AG04449 (cell line): ENCODE measurements at regions of chr5 and their contacts with region 1.

Region 1: DNA sequence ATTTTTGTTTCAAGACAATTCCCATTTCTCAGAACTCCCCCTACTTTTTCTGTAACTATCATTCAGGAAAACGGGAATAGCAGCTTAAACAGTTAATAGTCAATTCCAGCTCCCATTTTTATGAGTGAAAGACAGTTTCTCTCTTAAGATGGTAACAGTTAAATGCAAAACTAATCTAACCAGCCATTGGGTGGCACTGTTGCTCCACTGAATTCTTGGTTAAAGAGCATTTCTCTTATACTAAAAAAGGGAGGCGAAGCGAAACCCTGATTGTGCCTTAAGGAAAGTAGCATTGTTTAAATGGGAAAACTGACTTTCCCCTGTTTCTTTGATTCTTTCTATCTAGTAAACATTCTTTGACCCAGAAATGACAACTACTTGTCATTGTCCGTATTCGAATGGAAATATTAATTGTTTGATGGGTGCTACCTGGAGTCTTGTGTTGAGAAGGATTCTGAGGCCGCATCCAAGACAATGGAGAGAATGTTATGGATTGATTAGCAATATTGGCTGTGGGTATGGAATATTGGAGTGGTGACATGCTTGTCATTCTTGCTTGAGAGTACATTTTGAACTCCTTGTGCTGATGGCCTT is 507.8 kb downstream of the MAT2B start:
- DNase-seq: no peak
- H3K4me3 ChIP-seq: no peak overlapping the region
- CTCF ChIP-seq: peak; percentile 54

Region 2: GRCh38 chr5:163421673-163422072 is 591.5 kb before region 1 on chr5:
- CTCF ChIA-PET with region 1: no interaction called
- POLR2A ChIA-PET with region 1: no interaction called
- DNase-seq: no peak
- H3K4me3 ChIP-seq: no peak overlapping the region
- CTCF ChIP-seq: no peak

Region 3: DNA sequence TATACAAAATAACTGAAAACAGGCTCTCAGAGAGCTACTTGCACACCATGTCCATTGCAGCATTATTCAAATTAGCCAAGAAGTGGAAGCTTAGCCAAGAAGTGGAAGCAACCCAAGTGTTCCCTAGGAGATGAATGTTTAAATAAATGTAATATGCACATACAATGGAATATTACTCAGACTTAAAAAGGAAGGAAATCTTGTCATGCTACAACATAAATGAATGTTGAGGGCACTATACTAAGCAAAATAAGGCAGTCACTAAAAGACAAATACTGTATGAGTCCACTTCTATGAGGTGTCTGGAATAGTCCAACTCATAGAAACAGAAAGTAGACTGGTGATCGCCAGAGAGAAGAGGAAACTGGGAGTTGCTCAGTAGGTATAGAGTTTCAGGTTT is 69.6 kb before region 1 on chr5:
- CTCF ChIA-PET with region 1: no interaction called
- POLR2A ChIA-PET with region 1: no interaction called
- DNase-seq: no peak
- H3K4me3 ChIP-seq: no peak overlapping the region
- CTCF ChIP-seq: no peak

Region 4: GRCh38 chr5:164002628-164003027 is 10.5 kb before region 1 on chr5:
- CTCF ChIA-PET with region 1: interaction called, 28 read pairs
- POLR2A ChIA-PET with region 1: no interaction called
- DNase-seq: no peak
- H3K4me3 ChIP-seq: no peak overlapping the region
- CTCF ChIP-seq: no peak

Region 5: GRCh38 chr5:164027738-164028137 is 14.6 kb after region 1 on chr5:
- CTCF ChIA-PET with region 1: interaction called, 10 read pairs
- POLR2A ChIA-PET with region 1: no interaction called
- DNase-seq: no peak
- H3K4me3 ChIP-seq: no peak overlapping the region
- CTCF ChIP-seq: no peak